MCF 10A (cell line): ENCODE measurements at regions of chr20 and their contacts with region 1.

Region 1: GRCh38 chr20:1503564-1504227 is 12.5 kb upstream of the SIRPB2 start:
- DNase-seq: peak; percentile 92
- H3K4me3 Mint-ChIP-seq: no peak overlapping the region
- H3K27ac Mint-ChIP-seq: peak overlapping the region; percentile 32
- H3K4me1 Mint-ChIP-seq: peaks cover 52% of the 10 kb centered on the region
- H3K27me3 Mint-ChIP-seq: no peaks in the 10 kb centered on the region
- CTCF ChIP-seq: peak; percentile 99

Region 2: DNA sequence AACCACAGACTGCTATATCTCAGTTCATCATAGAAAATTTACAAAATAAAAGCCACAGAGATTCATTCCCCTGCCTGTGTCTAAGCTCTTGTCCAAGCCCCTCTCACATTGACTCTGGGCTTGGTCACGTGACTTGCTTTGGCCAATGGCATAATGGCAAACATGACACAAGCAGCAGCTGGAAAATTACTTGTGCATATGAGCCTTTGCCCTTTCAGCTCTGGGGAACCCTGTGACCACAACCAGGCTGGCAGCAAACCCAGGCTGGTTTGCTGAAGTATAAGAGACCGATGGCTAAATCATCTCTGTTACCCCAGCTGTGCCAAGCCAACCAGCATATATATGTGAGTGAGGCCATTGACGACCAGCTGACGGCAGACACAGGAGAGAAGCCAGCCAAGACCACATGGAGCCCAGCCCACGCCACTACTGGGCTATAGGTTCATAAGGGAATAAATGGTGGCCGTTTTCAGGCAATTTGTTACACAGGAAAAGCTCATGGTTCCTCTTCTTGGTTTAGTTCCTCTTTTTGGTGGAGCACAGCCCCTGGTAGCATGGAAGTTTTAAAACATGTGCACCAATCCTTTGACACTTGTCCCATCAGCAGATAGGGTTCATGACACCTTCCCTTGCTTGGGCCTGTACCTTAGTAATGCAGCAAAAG is 469.8 kb before region 1 on chr20:
- CTCF ChIA-PET with region 1: no interaction called
- POLR2A ChIA-PET with region 1: no interaction called
- intact Hi-C with region 1: no loop called
- DNase-seq: no peak
- H3K4me3 Mint-ChIP-seq: no peak overlapping the region
- H3K27ac Mint-ChIP-seq: no peak overlapping the region
- H3K4me1 Mint-ChIP-seq: no peaks in the 10 kb centered on the region
- H3K27me3 Mint-ChIP-seq: peaks cover 51% of the 10 kb centered on the region
- CTCF ChIP-seq: no peak

Region 3: GRCh38 chr20:1313236-1313964 is 190.3 kb before region 1 on chr20:
- CTCF ChIA-PET with region 1: interaction called, 21 read pairs
- POLR2A ChIA-PET with region 1: interaction called, 5 read pairs
- intact Hi-C with region 1: loop called (anchors 2 kb)
- DNase-seq: peak; percentile 68
- H3K4me3 Mint-ChIP-seq: no peak overlapping the region
- H3K27ac Mint-ChIP-seq: no peak overlapping the region
- H3K4me1 Mint-ChIP-seq: no peaks in the 10 kb centered on the region
- H3K27me3 Mint-ChIP-seq: no peaks in the 10 kb centered on the region
- CTCF ChIP-seq: peak; percentile 94

Region 4: GRCh38 chr20:1392823-1393506 is 110.7 kb before region 1 on chr20 and contains the start of gene FKBP1A:
- CTCF ChIA-PET with region 1: interaction called, 25 read pairs
- POLR2A ChIA-PET with region 1: interaction called, 15 read pairs
- intact Hi-C with region 1: loop called (anchors 2 kb)
- DNase-seq: peak; percentile 90
- H3K4me3 Mint-ChIP-seq: peak within 1 kb of the TSS; percentile 83
- H3K27ac Mint-ChIP-seq: peak within 1 kb of the TSS; percentile 91
- H3K4me1 Mint-ChIP-seq: peaks cover 31% of the 10 kb centered on the region
- H3K27me3 Mint-ChIP-seq: no peaks in the 10 kb centered on the region
- CTCF ChIP-seq: no peak
- total RNA-seq, gene FKBP1A: 209 and 217 TPM in 2 replicates

Region 5: GRCh38 chr20:1450926-1451491 is 52.7 kb before region 1 on chr20:
- CTCF ChIA-PET with region 1: interaction called, 38 read pairs
- POLR2A ChIA-PET with region 1: interaction called, 6 read pairs
- intact Hi-C with region 1: no loop called
- DNase-seq: no peak
- H3K4me3 Mint-ChIP-seq: no peak overlapping the region
- H3K27ac Mint-ChIP-seq: no peak overlapping the region
- H3K4me1 Mint-ChIP-seq: no peaks in the 10 kb centered on the region
- H3K27me3 Mint-ChIP-seq: no peaks in the 10 kb centered on the region
- CTCF ChIP-seq: no peak

Region 6: DNA sequence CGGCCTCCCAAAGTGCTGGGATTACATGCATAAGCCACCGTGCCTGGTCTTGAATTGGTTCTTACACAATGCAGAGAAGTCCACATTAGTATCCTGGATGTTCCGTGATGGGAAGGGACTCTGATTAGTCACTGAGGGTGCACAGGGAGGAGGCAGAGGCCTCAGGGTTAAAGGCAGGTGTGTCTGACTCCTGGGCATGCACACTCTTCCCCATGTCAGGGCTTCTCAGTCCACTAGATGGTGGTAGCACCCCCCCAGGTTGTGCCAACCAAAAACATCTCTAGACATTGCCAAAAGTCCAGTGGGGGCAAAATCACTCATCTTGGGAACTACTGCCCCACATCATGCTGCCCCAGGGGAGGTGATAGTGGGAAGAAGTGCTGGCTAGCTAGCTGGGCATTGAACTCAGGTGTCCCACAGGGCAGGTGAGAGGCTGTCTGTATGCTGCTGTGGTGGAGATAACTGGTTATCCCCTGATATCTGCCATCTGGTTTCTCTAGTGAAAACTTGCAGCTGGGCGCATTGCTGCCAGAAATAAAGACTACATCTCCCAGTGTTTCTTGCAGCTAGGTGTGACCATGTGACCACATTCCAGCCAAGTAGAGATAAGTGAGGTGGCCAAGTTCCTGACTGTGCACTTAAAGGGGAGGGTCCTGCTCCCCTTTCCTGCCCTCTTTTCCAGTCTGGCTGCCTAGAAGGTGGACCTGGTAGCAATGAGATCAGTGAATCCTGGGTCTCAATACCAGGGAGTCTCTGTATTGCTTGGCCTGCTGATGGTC is 28.7 kb before region 1 on chr20:
- CTCF ChIA-PET with region 1: interaction called, 615 read pairs
- POLR2A ChIA-PET with region 1: interaction called, 150 read pairs
- intact Hi-C with region 1: loop called (anchors 1 kb)
- DNase-seq: peak; percentile 92
- H3K4me3 Mint-ChIP-seq: no peak overlapping the region
- H3K27ac Mint-ChIP-seq: peak overlapping the region; percentile 69
- H3K4me1 Mint-ChIP-seq: peaks cover 43% of the 10 kb centered on the region
- H3K27me3 Mint-ChIP-seq: no peaks in the 10 kb centered on the region
- CTCF ChIP-seq: no peak

Region 7: GRCh38 chr20:1491281-1491840 is 12.3 kb before region 1 on chr20 and contains the start of gene SIRPB2:
- CTCF ChIA-PET with region 1: interaction called, 45 read pairs
- POLR2A ChIA-PET with region 1: interaction called, 108 read pairs
- intact Hi-C with region 1: no loop called
- DNase-seq: no peak
- H3K4me3 Mint-ChIP-seq: peak within 1 kb of the TSS; percentile 12
- H3K27ac Mint-ChIP-seq: peak within 1 kb of the TSS; percentile 92
- H3K4me1 Mint-ChIP-seq: peaks cover 18% of the 10 kb centered on the region
- H3K27me3 Mint-ChIP-seq: no peaks in the 10 kb centered on the region
- CTCF ChIP-seq: no peak
- total RNA-seq, gene SIRPB2: 1.3 and 1.8 TPM in 2 replicates

Region 8: DNA sequence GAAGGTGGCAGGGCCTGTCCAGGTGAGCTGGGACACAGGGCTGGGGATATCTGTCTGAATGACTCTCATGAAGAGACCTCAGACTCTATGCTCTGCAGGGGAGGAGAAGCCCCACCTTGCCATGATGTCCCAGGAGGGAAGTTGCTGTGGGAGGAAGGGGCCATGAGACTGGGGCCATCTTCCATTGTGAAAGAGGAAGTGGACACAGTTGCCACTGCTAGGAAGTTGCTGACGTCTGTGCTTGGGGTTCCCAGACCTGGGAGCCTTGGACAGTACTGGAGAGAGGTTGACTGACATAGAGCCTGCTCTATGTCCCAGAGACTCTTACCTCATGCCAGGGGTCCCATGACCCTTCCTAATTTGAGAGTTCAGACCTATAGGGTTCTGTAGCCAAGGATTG is 91.6 kb after region 1 on chr20:
- CTCF ChIA-PET with region 1: no interaction called
- POLR2A ChIA-PET with region 1: no interaction called
- intact Hi-C with region 1: no loop called
- DNase-seq: no peak
- H3K4me3 Mint-ChIP-seq: no peak overlapping the region
- H3K27ac Mint-ChIP-seq: no peak overlapping the region
- H3K4me1 Mint-ChIP-seq: no peaks in the 10 kb centered on the region
- H3K27me3 Mint-ChIP-seq: no peaks in the 10 kb centered on the region
- CTCF ChIP-seq: no peak

Region 9: GRCh38 chr20:1616858-1617434 is 113.2 kb after region 1 on chr20:
- CTCF ChIA-PET with region 1: no interaction called
- POLR2A ChIA-PET with region 1: no interaction called
- intact Hi-C with region 1: no loop called
- DNase-seq: no peak
- H3K4me3 Mint-ChIP-seq: no peak overlapping the region
- H3K27ac Mint-ChIP-seq: no peak overlapping the region
- H3K4me1 Mint-ChIP-seq: no peaks in the 10 kb centered on the region
- H3K27me3 Mint-ChIP-seq: no peaks in the 10 kb centered on the region
- CTCF ChIP-seq: no peak

Region 10: DNA sequence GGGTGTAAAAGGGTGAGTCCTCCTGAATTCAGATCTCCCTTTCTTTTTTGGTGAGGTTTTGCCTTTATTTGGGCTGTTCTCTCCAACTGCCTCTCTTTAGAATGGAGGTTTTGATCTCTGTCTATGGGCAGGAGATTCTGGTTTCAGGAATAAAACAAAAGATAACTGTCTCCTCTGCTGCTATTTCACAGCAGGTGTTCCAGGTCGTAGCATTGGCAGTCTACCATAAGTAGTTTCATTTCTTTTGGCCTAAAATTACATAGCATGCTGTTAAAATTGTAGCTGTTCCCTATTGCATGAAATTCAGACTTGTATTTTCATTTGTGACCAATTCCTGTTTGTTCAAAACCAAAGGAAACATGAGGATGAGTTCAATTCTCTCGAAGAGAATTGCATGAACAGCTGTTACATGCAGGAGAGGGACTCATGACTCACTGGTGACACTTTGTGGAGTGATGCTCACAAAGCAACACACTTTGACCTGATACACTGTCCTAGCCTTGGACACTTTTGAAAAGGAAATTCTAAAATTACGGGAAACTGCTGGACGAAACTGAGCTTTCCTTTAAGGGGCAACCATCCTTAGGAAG is 230.7 kb after region 1 on chr20:
- CTCF ChIA-PET with region 1: interaction called, 152 read pairs
- POLR2A ChIA-PET with region 1: interaction called, 20 read pairs
- intact Hi-C with region 1: no loop called
- DNase-seq: peak; percentile 52
- H3K4me3 Mint-ChIP-seq: no peak overlapping the region
- H3K27ac Mint-ChIP-seq: no peak overlapping the region
- H3K4me1 Mint-ChIP-seq: no peaks in the 10 kb centered on the region
- H3K27me3 Mint-ChIP-seq: no peaks in the 10 kb centered on the region
- CTCF ChIP-seq: peak; percentile 48